ENCODE measurements at regions of chr18 and their contacts with region 1.

Region 1: GRCh38 chr18:21489119-21489750 is 111.3 kb downstream of the ESCO1 start:
- DNase-seq: peak; percentile 60
- ATAC-seq: peak; percentile 90
- H3K4me3 Mint-ChIP-seq: no peak overlapping the region
- H3K27ac Mint-ChIP-seq: no peak overlapping the region
- H3K4me1 Mint-ChIP-seq: peaks cover 11% of the 10 kb centered on the region
- H3K27me3 Mint-ChIP-seq: no peaks in the 10 kb centered on the region; the same call in 1 of the 2 replicates
- CTCF ChIP-seq: peak; percentile 67

Region 2: DNA sequence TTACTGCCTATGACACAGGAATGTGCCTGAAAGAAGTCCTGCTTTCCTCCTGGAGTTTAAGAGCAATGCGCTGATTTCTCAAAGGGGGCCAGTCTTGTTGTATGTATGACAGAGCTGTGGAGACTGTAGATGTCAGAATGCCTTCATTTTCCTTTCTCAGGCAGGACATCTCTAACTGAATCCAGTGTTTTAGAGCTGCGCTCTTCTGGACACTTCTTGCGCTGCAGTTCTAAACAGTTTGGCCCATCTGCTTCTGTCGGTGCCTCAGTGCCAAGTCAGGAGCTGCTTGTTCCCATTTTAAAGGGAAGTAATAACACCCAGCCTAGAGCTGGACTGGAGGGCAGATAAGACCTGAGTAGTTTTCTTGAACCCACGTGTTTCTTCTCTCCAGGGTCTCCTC is 19.8 kb after region 1 on chr18:
- CTCF ChIA-PET with region 1: interaction called, 11 read pairs
- POLR2A ChIA-PET with region 1: no interaction called
- DNase-seq: no peak
- ATAC-seq: no peak; the same call in 1 of the 2 replicates
- H3K4me3 Mint-ChIP-seq: no peak overlapping the region
- H3K27ac Mint-ChIP-seq: no peak overlapping the region
- H3K4me1 Mint-ChIP-seq: peaks cover 5% of the 10 kb centered on the region
- H3K27me3 Mint-ChIP-seq: no peaks in the 10 kb centered on the region
- CTCF ChIP-seq: no peak

Measured in WTC11 (cell line).